Activated T-helper 1 cell treated with anti-CD3 and anti-CD28 coated beads, Interleukin-12 subunit alpha, Interleukin-12 subunit beta, Interleukin-2, Interleukin-4 antibody, amounts not matched to agents 30 ng/mL and 10 ng/mL and 1 ng/mL, durations not matched to agents 14 hours and 24 hours and 36 hours (primary cell): ENCODE measurements at regions of chr1 and their contacts with region 1.

Region 1: DNA sequence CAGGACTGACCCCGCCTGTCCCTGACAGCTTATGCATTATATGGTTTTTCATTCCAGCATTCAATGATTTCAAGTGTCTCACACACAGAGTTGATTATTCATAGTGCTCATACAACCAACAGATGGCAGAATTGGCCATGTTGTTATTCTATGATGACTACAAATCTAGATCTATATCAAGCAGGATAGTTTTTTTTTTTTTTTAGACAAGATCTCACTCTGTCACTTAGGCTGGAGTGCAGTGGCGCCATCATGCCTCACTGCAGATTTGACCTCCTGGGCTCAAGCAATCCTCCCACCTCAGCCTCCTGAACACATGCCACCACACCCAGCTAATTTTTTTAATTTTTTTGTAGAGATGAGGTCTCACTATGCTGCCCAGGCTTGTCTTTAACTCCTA is 40.1 kb upstream of the LRRC8D start:
- DNase-seq: no peak
- H3K4me3 Mint-ChIP-seq: peak overlapping the region; percentile 59
- H3K27ac Mint-ChIP-seq: peak overlapping the region; percentile 97
- H3K4me1 Mint-ChIP-seq: peaks cover 48% of the 10 kb centered on the region
- H3K27me3 Mint-ChIP-seq: peaks cover 4% of the 10 kb centered on the region

Region 2: GRCh38 chr1:89552471-89553081 is 228.1 kb before region 1 on chr1:
- intact Hi-C with region 1: loop called (anchors 1 kb)
- DNase-seq: no peak
- H3K4me3 Mint-ChIP-seq: peak overlapping the region; percentile 50
- H3K27ac Mint-ChIP-seq: peak overlapping the region; percentile 75
- H3K4me1 Mint-ChIP-seq: peaks cover 92% of the 10 kb centered on the region
- H3K27me3 Mint-ChIP-seq: no peaks in the 10 kb centered on the region

Region 3: DNA sequence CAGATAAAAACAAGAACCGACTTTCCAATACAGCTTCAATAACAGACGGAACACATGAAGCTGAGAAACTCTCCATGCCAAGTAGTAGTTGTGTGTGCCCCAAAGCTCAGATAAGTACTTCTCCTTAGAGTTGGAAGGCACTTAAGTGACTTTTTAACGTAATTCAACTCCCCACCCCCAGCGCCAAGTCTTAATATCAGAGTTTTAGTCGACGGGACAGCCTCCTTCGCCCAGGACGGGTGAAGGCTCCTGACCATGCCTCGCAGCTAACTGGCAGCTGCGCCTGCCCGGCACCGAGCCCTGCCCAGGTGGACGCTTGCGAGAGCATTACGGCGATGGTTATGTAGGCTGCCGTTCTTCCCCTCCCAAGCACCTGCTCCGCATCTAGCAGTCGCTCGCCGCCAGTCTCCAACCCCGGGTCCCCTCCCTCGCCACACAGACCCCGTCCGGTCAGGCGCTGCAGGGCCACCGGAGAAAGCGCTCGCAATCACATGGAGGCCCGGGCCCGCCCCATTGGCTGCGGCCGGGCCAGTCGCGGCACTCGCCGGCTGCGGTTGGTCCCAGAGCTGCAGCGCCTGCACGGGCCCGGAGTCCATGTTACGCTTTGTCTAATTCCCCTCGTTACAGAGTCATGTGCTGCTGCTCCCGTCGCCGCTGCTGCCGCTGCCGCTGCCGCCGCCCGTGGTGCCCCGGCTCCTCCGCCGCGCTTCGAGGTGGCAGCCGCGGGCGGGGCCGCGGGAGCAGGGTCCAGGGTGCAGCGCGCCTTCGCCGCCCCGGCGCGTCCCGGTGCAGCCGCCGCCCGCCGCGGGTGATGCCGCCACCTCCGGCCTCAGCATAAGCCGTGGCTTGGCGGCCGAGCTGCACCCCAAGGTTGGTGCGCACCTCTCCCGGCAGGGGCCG is 40.0 kb after region 1 on chr1 and contains the start of gene LRRC8D:
- intact Hi-C with region 1: loop called (anchors 2 kb)
- DNase-seq: peak; percentile 72
- H3K4me3 Mint-ChIP-seq: peak within 1 kb of the TSS; percentile 84
- H3K27ac Mint-ChIP-seq: peak within 1 kb of the TSS; percentile 68
- H3K4me1 Mint-ChIP-seq: peaks cover 15% of the 10 kb centered on the region
- H3K27me3 Mint-ChIP-seq: peaks cover 8% of the 10 kb centered on the region
- total RNA-seq, gene LRRC8D: 43.3 and 45.0 TPM in 2 replicates

Region 4: DNA sequence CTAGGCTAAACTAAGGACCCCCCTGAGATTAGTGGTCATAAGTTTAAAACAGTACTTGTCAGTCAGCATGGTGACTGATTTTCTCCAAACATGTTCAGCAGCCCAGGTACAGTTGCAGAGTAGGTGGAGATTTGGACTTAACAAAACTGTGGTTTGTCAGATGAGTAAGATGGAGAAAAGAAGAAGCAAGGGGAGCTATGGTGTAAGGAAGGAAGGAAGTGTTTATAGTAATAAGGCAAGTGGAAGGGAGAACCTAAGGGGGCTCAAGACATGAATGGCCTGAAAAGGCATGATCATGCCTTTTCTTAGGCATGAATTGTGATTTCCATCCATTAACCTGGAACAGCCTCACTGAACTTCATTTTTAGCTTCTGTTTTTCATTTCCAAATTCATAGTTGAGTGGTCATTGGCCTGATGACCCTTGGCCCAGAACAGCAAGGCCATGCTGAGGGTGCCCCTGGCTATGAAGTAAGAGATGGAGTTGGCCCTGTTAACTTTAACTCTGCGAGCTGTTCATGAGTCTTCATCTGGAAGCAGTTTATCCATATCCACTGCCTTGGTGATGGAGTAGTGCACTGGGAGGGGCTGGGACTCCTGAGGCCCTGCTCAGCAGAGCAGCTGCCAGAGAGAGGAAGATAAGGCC is 100.8 kb after region 1 on chr1:
- intact Hi-C with region 1: no loop called
- DNase-seq: no peak
- H3K4me3 Mint-ChIP-seq: no peak overlapping the region
- H3K27ac Mint-ChIP-seq: no peak overlapping the region
- H3K4me1 Mint-ChIP-seq: peaks cover 25% of the 10 kb centered on the region
- H3K27me3 Mint-ChIP-seq: no peaks in the 10 kb centered on the region

Region 5: GRCh38 chr1:89987170-89987819 is 206.6 kb after region 1 on chr1:
- intact Hi-C with region 1: loop called (anchors 1 kb)
- DNase-seq: peak; percentile 54
- H3K4me3 Mint-ChIP-seq: no peak overlapping the region
- H3K27ac Mint-ChIP-seq: no peak overlapping the region
- H3K4me1 Mint-ChIP-seq: peaks cover 11% of the 10 kb centered on the region
- H3K27me3 Mint-ChIP-seq: peaks cover 7% of the 10 kb centered on the region